IMR-90 (cell line): ENCODE measurements at regions of chr3 and their contacts with region 1.

Region 1: DNA sequence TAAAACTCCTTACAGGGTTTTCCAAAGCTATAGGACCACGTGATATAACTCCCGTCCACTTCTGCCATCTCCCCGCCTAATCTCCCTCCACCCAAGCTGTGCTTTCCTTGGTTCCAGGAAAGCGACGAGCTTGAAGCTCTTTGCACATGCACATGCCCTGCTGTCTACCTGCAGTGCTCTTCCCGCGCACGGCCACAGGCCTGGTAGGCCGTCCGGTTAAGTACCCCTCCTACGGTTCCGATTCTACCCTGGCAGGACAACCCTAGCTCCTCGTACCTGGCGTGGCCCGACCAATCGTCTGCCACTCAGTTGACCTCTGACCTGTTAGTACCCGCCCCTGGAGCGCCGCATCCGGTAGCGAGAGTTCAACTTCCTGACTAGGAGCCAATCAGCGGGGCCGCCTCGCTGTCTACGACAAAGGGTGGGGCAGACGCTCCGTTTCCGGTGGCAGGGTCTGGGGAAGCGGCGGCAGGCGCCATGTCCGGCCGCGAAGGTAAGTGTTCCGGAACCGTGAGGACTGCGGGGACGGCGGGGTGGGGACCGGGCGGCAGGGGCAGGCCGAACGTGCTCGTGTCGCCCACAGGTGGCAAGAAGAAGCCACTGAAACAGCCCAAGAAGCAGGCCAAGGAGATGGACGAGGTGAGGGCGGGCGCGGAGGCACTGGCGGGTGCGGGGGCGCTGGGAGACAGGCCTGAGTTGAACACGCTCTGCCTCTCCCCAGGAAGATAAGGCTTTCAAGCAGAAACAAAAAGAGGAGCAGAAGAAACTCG is at the starts of genes CCDC51 and TMA7:
- DNase-seq: peak; percentile 93
- ATAC-seq: peak; percentile 97
- H3K4me3 ChIP-seq: peak within 1 kb of the TSS; percentile 90
- H3K27ac ChIP-seq: peak within 1 kb of the TSS; percentile 89
- H3K4me1 ChIP-seq: 0 out of 2 replicates have a peak, but pooled peaks cover 2% of the 10 kb centered on the region
- H3K27me3 ChIP-seq: no peaks in the 10 kb centered on the region
- CTCF ChIP-seq: no peak
- POLR2A ChIP-seq: peak; percentile 88
- RAD21 ChIP-seq: no peak
- total RNA-seq, gene CCDC51: 15.3 and 16.1 TPM in 2 replicates
- total RNA-seq, gene TMA7: 81.9 and 131 TPM in 2 replicates

Region 2: DNA sequence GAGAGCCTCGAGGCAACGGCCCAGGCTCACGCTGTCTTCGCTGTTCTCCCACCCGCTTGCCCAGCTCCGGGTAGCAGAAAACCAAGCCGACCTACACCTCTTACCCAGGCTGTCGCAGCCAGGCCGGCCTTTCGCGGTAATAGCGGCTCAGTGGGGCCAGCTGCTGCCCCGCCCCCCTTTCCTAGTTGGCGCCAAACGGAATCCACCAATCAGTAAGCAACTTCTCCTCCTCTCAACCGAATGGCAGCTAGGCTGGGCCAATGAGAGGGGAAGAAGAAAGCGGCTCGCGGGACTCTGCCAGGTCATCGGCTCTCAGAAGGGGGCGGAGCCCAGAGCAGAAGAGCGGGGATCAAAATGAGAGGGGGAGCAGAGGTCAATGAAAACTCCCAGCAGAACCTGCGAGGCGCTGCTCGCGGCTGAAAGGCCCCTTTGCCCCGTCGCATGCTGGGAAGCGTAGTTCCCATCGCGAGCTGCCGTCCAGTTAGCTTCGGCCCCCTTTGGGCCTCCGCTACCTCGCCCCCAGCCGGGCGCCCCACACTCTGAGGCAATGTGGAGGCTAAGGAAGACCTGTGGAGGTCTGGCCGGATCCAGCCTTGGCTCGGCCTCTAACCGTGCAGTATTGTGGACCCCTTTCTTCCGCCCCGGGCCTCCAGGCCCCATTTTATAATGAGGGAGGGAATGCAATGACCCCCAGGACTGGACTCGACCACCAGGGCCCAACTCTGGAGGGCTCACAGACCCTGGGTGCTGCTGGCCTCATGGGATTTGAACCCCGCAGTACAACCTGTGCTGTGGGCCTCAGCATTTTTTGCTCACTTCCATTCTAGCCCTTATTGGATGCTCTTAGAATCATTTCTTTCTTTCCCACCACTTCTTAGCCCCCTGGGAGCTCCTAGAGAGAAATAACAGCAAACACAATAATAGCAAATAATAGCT is 251.5 kb before region 1 on chr3 and contains the start of gene CDC25A:
- CTCF ChIA-PET with region 1: interaction called, 23 read pairs
- POLR2A ChIA-PET with region 1: interaction called, 14 read pairs
- dilution Hi-C with region 1: no loop called
- in situ Hi-C with region 1: no loop called
- intact Hi-C with region 1: no loop called
- DNase-seq: peak; percentile 98
- ATAC-seq: peak; percentile 98
- H3K4me3 ChIP-seq: peak within 1 kb of the TSS; percentile 67
- H3K27ac ChIP-seq: peak within 1 kb of the TSS; percentile 74
- H3K4me1 ChIP-seq: peaks cover 2% of the 10 kb centered on the region; the same call in 1 of the 2 replicates
- H3K27me3 ChIP-seq: no peaks in the 10 kb centered on the region
- CTCF ChIP-seq: no peak
- POLR2A ChIP-seq: peak; percentile 71; the same call in 1 of the 2 replicates
- RAD21 ChIP-seq: no peak
- total RNA-seq, gene CDC25A: 9.7 and 10.6 TPM in 2 replicates

Region 3: DNA sequence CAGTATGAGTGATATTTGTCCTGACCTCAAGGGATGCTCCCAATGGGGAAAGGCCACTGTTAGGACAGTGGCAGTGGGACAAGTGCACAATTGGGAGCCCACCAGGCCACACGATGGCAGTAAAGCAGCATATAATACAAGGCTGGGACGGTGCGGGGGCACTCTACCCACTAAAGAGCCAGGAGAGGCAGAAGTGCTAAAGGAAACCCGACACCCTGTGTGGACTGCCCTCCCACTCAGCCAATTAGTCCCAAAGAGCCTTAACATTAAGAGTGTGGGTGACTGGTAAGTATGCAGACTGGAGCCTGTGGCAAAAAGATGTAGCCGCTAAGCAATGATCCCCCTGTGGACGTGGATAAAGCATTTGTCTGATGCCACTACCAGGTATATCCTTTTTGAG is 207.3 kb before region 1 on chr3:
- CTCF ChIA-PET with region 1: no interaction called
- POLR2A ChIA-PET with region 1: no interaction called
- dilution Hi-C with region 1: no loop called
- in situ Hi-C with region 1: no loop called
- intact Hi-C with region 1: loop called (anchors 1 kb)
- DNase-seq: peak; percentile 50
- ATAC-seq: peak; percentile 99
- H3K4me3 ChIP-seq: no peak overlapping the region
- H3K27ac ChIP-seq: no peak overlapping the region
- H3K4me1 ChIP-seq: no peaks in the 10 kb centered on the region
- H3K27me3 ChIP-seq: no peaks in the 10 kb centered on the region; the same call in 1 of the 2 replicates
- CTCF ChIP-seq: peak; percentile 59
- POLR2A ChIP-seq: no peak
- RAD21 ChIP-seq: peak; percentile 58

Region 4: DNA sequence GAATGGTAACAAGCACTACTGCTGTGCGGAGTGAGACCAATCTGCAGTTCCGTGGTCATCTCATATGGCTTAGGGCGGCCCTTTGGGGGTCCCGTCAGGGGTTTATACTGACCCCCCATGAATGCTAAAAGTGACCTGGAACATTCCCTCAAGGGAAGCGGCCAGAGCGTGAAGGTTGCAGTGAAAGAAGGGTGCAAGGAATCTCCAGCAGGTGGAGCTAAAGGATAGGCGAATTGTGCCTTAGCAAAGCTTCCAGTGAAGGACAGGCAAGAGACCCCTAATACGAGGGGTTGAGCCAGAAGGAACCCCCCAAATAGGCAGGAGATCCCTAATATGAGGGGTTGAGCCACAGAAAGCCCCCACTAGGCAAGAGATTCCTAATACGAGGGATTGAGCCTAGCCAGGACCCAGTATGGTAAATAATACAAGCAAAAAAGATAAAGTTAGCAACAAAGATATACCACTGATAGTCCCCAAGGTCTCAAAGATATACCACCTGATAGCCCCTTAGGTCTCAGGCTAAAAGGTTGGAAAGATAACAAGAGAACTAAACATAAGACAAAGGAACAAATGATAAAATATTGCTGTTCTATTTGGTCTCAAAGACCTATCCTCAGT is 166.3 kb before region 1 on chr3:
- CTCF ChIA-PET with region 1: interaction called, 25 read pairs
- POLR2A ChIA-PET with region 1: no interaction called
- dilution Hi-C with region 1: no loop called
- in situ Hi-C with region 1: loop called (anchors 5 kb)
- intact Hi-C with region 1: loop called (anchors 1 kb)
- DNase-seq: peak; percentile 62
- ATAC-seq: peak; percentile 92
- H3K4me3 ChIP-seq: no peak overlapping the region
- H3K27ac ChIP-seq: no peak overlapping the region
- H3K4me1 ChIP-seq: no peaks in the 10 kb centered on the region
- H3K27me3 ChIP-seq: no peaks in the 10 kb centered on the region
- CTCF ChIP-seq: peak; percentile 85
- POLR2A ChIP-seq: 0 out of 2 replicates have a peak, but pooled peaks have one; percentile 31
- RAD21 ChIP-seq: peak; percentile 89

Region 5: DNA sequence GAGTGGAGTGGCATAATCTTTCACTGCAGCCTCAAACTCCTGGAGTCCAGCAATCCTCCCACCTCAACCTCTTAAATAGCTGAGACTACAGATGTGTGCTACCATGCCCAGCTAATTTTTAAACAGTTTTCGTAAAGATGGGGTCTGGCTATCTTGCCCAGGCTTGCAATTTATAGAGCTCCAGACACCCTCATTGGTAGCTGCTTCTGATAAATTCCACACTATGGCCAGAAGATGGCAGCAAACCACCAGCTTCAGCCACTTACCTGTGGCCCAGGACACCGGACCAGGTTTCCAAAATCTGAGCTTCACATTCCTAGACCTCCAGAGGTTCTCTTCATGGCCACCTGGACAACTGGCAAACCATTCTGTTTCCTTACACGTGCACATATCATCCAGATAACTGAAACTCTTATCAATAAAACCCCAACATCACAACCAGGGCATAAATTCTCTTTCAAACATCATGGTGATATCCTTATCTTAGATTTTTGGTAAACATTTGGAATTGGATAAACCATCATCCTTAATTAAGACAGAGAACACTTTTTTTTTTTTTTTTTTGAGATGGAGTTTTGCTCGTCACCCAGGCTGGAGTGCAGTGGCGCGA is 39.1 kb before region 1 on chr3:
- CTCF ChIA-PET with region 1: interaction called, 65 read pairs
- POLR2A ChIA-PET with region 1: interaction called, 4 read pairs
- dilution Hi-C with region 1: no loop called
- in situ Hi-C with region 1: loop called (anchors 5 kb)
- intact Hi-C with region 1: loop called (anchors 1 kb)
- DNase-seq: peak; percentile 51
- ATAC-seq: peak; percentile 26; the same call in 1 of the 2 replicates
- H3K4me3 ChIP-seq: no peak overlapping the region
- H3K27ac ChIP-seq: no peak overlapping the region
- H3K4me1 ChIP-seq: peaks cover 7% of the 10 kb centered on the region
- H3K27me3 ChIP-seq: no peaks in the 10 kb centered on the region; the same call in 1 of the 2 replicates
- CTCF ChIP-seq: peak; percentile 65
- POLR2A ChIP-seq: no peak
- RAD21 ChIP-seq: peak; percentile 80

Region 6: DNA sequence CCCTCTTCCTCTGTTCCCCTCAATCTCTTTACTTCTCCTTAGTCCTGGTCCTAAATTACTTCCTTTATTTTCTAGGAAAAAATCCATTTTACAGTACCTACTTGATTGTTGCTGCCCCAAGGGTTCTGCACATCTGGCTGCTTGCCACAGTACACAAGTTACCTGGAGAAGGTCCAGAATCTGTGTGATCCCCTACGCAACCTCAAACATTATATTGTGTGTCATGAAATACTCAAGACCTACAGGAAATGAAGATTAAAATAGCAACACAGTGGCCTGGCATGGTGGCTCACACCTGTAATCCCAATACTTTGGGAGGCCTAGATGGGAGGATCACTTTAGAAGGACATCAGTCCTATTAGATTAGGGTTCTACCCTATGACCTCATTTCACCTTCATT is 359.0 kb after region 1 on chr3:
- CTCF ChIA-PET with region 1: no interaction called
- POLR2A ChIA-PET with region 1: no interaction called
- dilution Hi-C with region 1: no loop called
- in situ Hi-C with region 1: no loop called
- intact Hi-C with region 1: no loop called
- DNase-seq: no peak
- ATAC-seq: no peak
- H3K4me3 ChIP-seq: no peak overlapping the region
- H3K27ac ChIP-seq: no peak overlapping the region
- H3K4me1 ChIP-seq: no peaks in the 10 kb centered on the region
- H3K27me3 ChIP-seq: no peaks in the 10 kb centered on the region
- CTCF ChIP-seq: no peak
- POLR2A ChIP-seq: no peak
- RAD21 ChIP-seq: no peak